ENCODE measurements at regions of chr5 and their contacts with region 1.

Region 1: GRCh38 chr5:141811287-141812155 is 66.7 kb downstream of the PCDH1 start:
- DNase-seq: no peak
- H3K4me3 ChIP-seq: no peak overlapping the region
- H3K27ac ChIP-seq: no peak overlapping the region
- H3K4me1 ChIP-seq: 0 out of 2 replicates have a peak, but pooled peaks cover under 1% of the 10 kb centered on the region
- H3K27me3 ChIP-seq: no peaks in the 10 kb centered on the region
- CTCF ChIP-seq: peak; percentile 84

Region 2: DNA sequence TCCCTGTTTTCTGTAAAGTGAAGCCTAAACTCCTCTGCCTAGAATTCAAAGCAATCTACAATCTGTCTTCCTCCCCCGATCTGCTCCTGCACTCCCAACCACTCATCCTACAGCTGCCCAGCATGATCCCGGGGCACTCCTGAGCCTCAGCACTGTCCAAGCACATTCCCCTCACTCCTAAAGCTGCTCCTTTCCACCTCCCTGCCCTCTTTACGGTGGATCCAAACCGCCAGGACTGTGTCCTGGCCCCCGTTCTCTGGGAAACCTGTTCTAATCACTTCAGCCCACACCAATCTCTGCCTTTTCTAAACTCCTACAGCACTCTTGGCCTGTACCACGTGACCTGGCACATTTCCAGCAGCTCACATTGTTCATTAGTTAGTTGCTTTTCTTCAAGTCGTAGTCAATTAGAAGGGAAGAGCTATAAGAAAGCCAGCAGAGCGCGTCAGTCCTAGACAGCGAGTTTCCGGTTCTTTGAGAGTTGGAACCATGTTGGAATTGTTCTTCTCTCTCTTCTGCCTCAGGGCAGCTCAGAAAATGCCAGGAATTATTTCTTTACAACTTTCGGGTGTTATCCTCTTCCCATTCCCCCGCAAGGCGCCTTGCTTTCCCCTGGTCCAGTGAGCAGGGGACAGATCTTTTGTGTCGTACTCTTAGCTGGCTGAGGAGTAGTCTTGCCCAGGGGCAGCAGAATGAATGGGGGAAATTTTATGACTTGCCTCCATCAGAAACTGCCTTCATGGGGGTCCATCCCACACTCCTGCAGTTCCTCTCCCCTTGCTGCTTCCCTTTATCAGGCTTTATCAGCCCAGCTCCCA is 1829.2 kb before region 1 on chr5:
- CTCF ChIA-PET with region 1: no interaction called
- POLR2A ChIA-PET with region 1: no interaction called
- intact Hi-C with region 1: no loop called
- DNase-seq: no peak
- H3K4me3 ChIP-seq: no peak overlapping the region
- H3K27ac ChIP-seq: no peak overlapping the region
- H3K4me1 ChIP-seq: peaks cover 28% of the 10 kb centered on the region
- H3K27me3 ChIP-seq: 0 out of 2 replicates have a peak, but pooled peaks cover 6% of the 10 kb centered on the region
- CTCF ChIP-seq: no peak

Region 3: DNA sequence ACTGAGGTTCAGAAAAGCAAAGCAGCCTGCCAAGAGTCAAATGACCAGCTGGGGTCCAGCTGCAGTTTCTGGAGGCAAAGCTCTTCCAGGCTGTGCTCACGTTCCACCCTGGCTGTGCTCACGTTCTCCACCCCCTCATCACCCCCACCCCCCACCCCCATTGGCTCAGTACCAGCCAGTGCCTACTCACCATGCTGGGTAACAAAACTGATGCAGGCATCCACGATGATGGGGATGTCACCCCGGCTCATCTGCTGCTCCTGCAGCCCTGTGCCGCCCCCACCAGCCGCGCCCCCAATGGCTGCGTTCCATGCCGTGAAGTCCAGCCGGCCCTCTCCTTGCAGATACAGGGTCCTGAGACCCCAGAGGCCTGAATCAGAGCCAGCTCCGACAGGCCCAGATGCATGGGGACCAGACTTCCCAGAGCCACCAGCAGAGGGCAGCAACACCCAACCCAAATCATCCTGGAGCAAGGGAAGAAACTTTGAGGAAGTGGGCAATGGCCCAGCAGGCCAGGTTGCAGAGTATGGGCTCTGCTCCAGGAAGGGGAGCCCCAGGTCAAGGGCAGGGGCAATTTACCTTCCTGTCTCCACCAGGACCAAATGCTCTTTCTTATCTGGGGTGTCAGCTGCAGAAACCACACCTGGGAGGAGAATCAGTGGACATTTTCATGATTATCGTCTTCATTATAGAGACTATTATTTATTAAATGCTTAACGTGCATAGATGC is 146.6 kb before region 1 on chr5:
- CTCF ChIA-PET with region 1: interaction called, 3 read pairs
- POLR2A ChIA-PET with region 1: no interaction called
- intact Hi-C with region 1: loop called (anchors 1 kb)
- DNase-seq: peak; percentile 44 to 74
- H3K4me3 ChIP-seq: no peak overlapping the region
- H3K27ac ChIP-seq: no peak overlapping the region
- H3K4me1 ChIP-seq: no peaks in the 10 kb centered on the region
- H3K27me3 ChIP-seq: no peaks in the 10 kb centered on the region
- CTCF ChIP-seq: peak; percentile 93

Region 4: GRCh38 chr5:141701360-141702119 is 110.0 kb before region 1 on chr5:
- CTCF ChIA-PET with region 1: interaction called, 5 read pairs
- POLR2A ChIA-PET with region 1: no interaction called
- intact Hi-C with region 1: loop called (anchors 1 kb)
- DNase-seq: no peak
- H3K4me3 ChIP-seq: no peak overlapping the region
- H3K27ac ChIP-seq: no peak overlapping the region
- H3K4me1 ChIP-seq: peaks cover 59% of the 10 kb centered on the region
- H3K27me3 ChIP-seq: no peaks in the 10 kb centered on the region
- CTCF ChIP-seq: no peak

Region 5: DNA sequence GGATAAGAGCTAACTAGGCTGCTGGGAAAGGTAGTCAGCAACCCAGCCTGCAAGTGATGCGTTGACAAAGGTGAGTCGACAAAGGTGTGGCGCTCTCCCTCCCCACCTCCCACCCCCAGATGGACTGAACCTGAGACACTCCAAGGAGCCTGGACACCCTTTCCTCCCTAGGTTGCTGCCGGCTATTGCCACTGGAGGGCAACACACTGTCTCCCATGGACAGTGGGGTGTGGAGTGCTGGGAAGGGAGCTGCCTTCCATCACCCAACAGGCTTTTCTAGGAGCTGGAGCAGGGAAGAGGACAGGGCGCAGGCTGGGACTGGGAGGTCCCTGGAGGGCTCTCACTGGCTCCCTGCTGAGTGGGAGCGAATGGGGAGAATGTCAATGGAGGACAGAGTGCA is 54.1 kb before region 1 on chr5:
- CTCF ChIA-PET with region 1: interaction called, 5 read pairs
- POLR2A ChIA-PET with region 1: no interaction called
- intact Hi-C with region 1: loop called (anchors 5 kb)
- DNase-seq: peak; percentile 64 to 75
- H3K4me3 ChIP-seq: no peak overlapping the region
- H3K27ac ChIP-seq: no peak overlapping the region
- H3K4me1 ChIP-seq: peaks cover 14% of the 10 kb centered on the region
- H3K27me3 ChIP-seq: no peaks in the 10 kb centered on the region
- CTCF ChIP-seq: peak; percentile 74

Region 6: DNA sequence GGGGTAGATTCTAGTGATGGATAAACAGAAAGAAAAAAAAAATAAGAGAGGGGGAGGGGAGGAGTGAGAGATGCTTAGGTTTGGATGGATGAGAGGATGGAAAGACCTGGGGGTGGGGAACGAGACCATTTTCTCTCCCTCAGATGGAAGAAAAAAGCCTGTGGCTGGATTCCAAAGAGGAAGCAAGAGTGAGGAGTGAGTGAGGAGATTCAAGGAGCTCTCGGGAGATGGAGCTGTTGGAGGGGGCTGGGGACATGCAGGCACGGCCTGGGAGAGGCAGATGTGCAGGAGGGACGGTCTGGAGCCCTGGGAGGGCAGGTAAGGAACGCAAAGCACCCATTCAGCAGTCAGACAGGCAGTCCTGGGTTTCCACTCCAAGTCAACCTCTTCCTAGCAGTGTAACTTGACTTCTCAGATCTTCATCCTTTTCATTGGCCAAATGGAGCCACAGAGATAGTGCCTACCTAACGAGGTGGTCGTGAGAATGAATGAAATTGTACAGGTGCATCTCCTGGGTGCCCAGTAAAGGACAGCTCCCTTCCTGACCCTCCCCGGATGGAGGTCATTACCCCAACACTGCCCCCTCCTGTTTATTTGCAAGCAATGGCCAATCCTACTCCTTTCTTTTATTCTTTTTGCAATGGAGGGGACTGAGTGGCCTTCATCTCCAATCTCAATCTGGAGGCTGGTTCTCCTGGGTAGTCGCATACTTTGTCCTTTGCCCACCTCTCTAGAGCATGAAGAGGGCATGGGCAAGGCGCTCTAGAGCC is 14.5 kb after region 1 on chr5:
- CTCF ChIA-PET with region 1: no interaction called
- POLR2A ChIA-PET with region 1: interaction called, 19 read pairs
- intact Hi-C with region 1: no loop called
- DNase-seq: no peak
- H3K4me3 ChIP-seq: no peak overlapping the region
- H3K27ac ChIP-seq: no peak overlapping the region
- H3K4me1 ChIP-seq: peaks cover 6% of the 10 kb centered on the region
- H3K27me3 ChIP-seq: no peaks in the 10 kb centered on the region
- CTCF ChIP-seq: peak; percentile 59

Region 7: GRCh38 chr5:141849375-141850243 is 38.1 kb after region 1 on chr5:
- CTCF ChIA-PET with region 1: no interaction called
- POLR2A ChIA-PET with region 1: no interaction called
- intact Hi-C with region 1: loop called (anchors 2 kb)
- DNase-seq: peak; percentile 72 to 89
- H3K4me3 ChIP-seq: peak overlapping the region; percentile 98
- H3K27ac ChIP-seq: peak overlapping the region; percentile 99
- H3K4me1 ChIP-seq: peaks cover 41% of the 10 kb centered on the region
- H3K27me3 ChIP-seq: no peaks in the 10 kb centered on the region
- CTCF ChIP-seq: no peak

Measured in PC-9 (cell line).